ENCODE measurements at regions of chr1 and their contacts with region 1.

Region 1: GRCh38 chr1:202315576-202316168 is 26.1 kb downstream of the UBE2T start:
- DNase-seq: peak; percentile 44
- H3K4me3 ChIP-seq: no peak overlapping the region
- H3K27ac ChIP-seq: no peak overlapping the region
- H3K27me3 ChIP-seq: peaks cover 38% of the 10 kb centered on the region
- CTCF ChIP-seq: peak; percentile 99

Region 2: GRCh38 chr1:202184750-202185460 is 130.8 kb before region 1 on chr1:
- CTCF ChIA-PET with region 1: interaction called, 121 read pairs
- POLR2A ChIA-PET with region 1: no interaction called
- DNase-seq: peak; percentile 55
- H3K4me3 ChIP-seq: no peak overlapping the region
- H3K27ac ChIP-seq: no peak overlapping the region
- H3K27me3 ChIP-seq: peaks cover 49% of the 10 kb centered on the region
- CTCF ChIP-seq: peak; percentile 92

Region 3: DNA sequence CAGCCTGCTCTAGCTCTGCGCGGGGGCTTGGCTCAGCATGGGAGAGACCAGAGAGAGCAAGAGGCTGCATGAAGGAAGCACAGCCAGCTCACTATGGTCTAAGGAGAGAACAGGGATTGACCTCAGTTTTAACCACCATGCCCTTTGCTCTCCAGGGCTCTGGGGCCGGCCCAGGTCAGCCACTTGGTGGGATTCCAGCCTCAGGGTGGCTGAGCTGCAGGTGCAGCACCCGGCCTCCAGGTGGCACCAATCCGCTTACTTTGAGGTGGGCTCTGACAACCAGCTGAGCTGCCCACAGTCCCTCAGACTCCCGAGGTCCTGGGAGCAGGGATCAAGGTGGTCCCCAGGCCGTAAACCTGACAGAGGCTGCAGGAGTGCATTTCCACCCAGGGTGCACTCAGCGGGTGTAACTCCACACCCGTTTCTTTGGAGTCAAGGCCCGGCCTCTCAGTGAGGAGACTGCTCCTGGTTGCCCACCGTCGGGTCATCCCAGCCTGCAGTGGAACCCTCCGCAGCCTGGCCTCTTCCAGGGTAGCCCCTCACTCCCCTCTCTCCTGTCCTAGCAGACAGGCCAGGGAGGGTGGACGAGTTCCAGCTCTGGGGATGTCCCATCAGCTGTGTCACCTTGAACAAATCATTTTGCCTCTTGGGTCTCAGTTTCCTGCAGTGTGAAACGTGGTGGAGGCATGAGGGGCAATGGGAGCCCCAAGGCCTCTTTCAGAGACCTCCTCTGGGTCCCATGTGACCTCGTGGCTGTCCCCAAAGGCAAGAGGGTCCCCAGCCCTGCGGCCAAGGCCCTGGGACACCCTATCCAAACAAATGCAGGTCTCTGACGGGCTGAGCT is 122.7 kb before region 1 on chr1:
- CTCF ChIA-PET with region 1: interaction called, 121 read pairs
- POLR2A ChIA-PET with region 1: no interaction called
- DNase-seq: no peak
- H3K4me3 ChIP-seq: no peak overlapping the region
- H3K27ac ChIP-seq: no peak overlapping the region
- H3K27me3 ChIP-seq: peaks cover 50% of the 10 kb centered on the region
- CTCF ChIP-seq: peak; percentile 85

Region 4: DNA sequence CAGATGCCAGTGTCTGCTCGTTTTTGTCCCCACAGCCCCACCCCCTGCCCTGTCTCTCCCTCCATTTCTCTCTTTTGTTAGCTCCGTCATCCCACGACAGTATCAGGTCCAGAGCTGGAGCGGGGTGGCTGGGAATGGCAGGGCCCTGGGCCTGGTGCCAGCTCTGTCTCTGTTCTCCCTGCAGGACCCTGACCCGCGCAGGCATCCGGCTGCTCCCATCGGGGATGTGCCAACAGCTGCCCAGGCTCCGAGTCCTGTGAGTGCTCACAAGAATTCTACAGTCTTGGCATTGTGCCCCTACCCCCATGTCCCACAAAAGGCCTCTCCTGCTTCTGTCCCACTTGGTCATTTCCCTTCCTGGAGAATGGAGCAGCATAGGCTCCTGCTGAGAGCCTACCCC is 11.3 kb before region 1 on chr1:
- CTCF ChIA-PET with region 1: interaction called, 21 read pairs
- POLR2A ChIA-PET with region 1: interaction called, 3 read pairs
- DNase-seq: no peak
- H3K4me3 ChIP-seq: no peak overlapping the region
- H3K27ac ChIP-seq: no peak overlapping the region
- H3K27me3 ChIP-seq: peaks cover 57% of the 10 kb centered on the region
- CTCF ChIP-seq: no peak

Region 5: GRCh38 chr1:202329891-202330290 is 14.2 kb after region 1 on chr1:
- CTCF ChIA-PET with region 1: interaction called, 12 read pairs
- POLR2A ChIA-PET with region 1: no interaction called
- DNase-seq: no peak
- H3K4me3 ChIP-seq: no peak overlapping the region
- H3K27ac ChIP-seq: no peak overlapping the region
- H3K27me3 ChIP-seq: no peaks in the 10 kb centered on the region
- CTCF ChIP-seq: no peak

Region 6: DNA sequence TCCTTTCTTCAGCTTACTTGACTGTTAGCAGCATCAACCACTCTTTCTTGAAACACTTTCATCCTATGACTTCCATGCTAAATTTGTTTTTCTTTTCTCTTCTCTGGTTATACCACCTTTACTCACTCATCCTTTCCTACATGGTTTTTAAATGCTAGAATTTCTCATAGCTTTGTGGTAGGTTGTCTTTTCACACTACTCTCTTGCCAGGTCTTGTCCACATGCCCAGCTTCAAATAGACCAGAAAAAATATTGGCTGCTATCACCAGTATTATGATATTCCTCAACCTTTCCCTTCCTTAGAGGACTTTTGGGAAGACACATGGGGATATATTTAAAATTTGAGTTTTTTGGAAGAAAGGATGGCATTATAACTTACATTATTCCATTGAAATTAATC is 81.6 kb after region 1 on chr1:
- CTCF ChIA-PET with region 1: no interaction called
- POLR2A ChIA-PET with region 1: no interaction called
- DNase-seq: no peak
- H3K4me3 ChIP-seq: no peak overlapping the region
- H3K27ac ChIP-seq: no peak overlapping the region
- H3K27me3 ChIP-seq: no peaks in the 10 kb centered on the region
- CTCF ChIP-seq: no peak

Measured in AG04450 (cell line).